Caco-2 (cell line): ENCODE measurements at regions of chr3 and their contacts with region 1.

Region 1: DNA sequence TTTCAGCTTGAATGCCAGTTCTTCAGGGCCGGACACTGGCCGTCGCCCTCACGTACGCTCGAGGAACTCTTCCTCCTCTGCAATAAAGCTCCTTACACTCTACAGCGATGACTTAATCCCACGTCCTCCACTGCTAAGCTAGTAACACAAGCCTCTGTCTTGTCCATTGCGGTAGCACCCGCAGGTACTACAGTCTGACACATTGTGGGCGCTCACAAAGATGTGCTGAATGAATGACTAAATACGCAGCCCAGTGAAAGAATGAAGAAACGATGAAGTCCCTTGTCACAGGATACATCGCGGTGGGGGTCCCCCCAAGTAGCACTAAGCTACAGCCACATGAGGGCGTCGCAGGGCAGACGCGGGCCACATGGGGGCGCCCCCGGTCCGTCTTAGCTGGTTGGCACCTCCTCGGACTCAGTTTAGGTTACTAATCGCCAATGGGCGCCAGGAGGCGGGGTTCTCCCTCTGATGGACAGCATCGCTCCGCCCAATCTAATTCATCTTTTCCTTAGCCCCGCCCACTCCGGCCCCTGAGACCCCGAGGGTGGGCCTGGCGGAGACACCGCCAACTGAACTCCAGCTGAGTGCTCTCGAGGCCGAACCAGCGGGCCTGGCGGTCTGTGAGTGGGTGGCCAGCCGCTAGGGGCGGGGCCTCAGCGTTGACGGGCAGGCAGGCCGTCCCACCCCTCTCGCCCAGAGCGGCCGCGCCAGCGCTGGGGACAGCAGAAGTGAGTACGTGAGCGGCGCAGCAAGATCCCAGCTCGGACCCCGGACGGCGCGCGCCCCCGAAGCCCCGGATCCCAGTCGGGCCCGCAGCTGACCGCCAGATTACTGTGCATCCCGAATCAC is at the start of gene EPHB3:
- DNase-seq: peak; percentile 98 to 99
- H3K4me3 ChIP-seq: peak within 1 kb of the TSS; percentile 80
- H3K4me3 Mint-ChIP-seq: peak within 1 kb of the TSS; percentile 47
- H3K27ac Mint-ChIP-seq: no peak within 1 kb of the TSS
- H3K4me1 ChIP-seq: peaks cover 19% of the 10 kb centered on the region
- H3K4me1 Mint-ChIP-seq: peaks cover 24% of the 10 kb centered on the region
- H3K27me3 ChIP-seq: peaks cover 1% of the 10 kb centered on the region; the same call in 1 of the 2 replicates
- H3K27me3 Mint-ChIP-seq: peaks cover 12% of the 10 kb centered on the region
- CTCF ChIP-seq: peak; percentile 97 to 100
- total RNA-seq, gene EPHB3: 5.6 and 6.9 TPM in 2 replicates

Region 2: GRCh38 chr3:184711493-184712247 is 150.4 kb after region 1 on chr3 and contains the start of gene MAGEF1:
- CTCF ChIA-PET with region 1: no interaction called
- POLR2A ChIA-PET with region 1: interaction called, 9 read pairs
- intact Hi-C with region 1: loop called (anchors 1 kb)
- DNase-seq: peak; percentile 91 to 92
- H3K4me3 ChIP-seq: peak within 1 kb of the TSS; percentile 88
- H3K4me3 Mint-ChIP-seq: peak within 1 kb of the TSS; percentile 95
- H3K27ac Mint-ChIP-seq: peak within 1 kb of the TSS; percentile 89
- H3K4me1 ChIP-seq: no peaks in the 10 kb centered on the region
- H3K4me1 Mint-ChIP-seq: peaks cover 14% of the 10 kb centered on the region
- H3K27me3 ChIP-seq: no peaks in the 10 kb centered on the region
- H3K27me3 Mint-ChIP-seq: no peaks in the 10 kb centered on the region
- CTCF ChIP-seq: no peak
- total RNA-seq, gene MAGEF1: 52.2 and 59.1 TPM in 2 replicates

Region 3: DNA sequence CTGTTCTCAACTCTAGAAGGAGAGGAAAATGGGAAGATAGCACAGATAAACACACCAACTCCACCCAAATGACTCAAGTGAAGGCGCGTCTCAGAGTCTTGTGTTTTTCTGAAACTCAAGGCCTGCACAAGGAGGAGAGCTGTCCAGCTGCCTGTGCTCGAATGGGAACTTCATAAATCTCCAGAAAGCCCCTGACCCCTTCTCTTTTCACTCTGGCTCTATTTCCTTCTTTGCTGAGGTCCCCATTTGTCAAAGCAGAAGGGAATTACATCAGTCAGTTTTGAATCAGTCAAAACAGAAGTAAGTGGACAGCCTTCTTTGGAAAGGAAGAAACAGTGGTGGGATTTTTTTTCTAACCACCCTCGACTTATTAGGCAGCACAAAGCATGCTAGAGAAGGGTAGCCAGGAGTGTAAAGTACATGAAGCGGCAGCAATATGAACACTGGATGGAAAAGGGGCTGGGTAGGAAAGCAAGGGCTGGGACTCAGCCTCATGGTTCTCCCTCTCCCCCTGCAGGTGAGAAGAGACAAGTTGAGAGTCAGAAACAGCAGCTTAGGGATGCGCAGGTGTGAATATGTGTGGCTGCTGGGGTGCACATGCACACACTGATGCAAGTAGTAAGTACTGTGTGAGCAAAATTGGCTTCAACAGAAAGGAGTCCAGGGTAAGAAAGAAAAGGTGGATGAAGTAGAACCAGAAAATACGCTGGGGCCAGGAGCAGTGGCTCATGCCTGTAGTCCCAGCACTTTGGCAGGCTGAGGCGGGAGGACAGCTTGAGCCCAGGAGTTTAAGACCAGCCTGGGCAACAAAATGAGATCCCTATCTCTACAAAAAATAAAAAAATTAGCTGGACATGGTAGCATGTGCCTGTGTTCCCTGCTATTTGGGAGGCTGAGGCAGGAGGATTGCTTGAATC is 187.2 kb after region 1 on chr3:
- CTCF ChIA-PET with region 1: interaction called, 29 read pairs
- POLR2A ChIA-PET with region 1: no interaction called
- intact Hi-C with region 1: loop called (anchors 1 kb)
- DNase-seq: peak; percentile 53 to 57
- H3K4me3 ChIP-seq: no peak overlapping the region
- H3K4me3 Mint-ChIP-seq: no peak overlapping the region
- H3K27ac Mint-ChIP-seq: no peak overlapping the region
- H3K4me1 ChIP-seq: peaks cover 21% of the 10 kb centered on the region
- H3K4me1 Mint-ChIP-seq: peaks cover 11% of the 10 kb centered on the region
- H3K27me3 ChIP-seq: no peaks in the 10 kb centered on the region
- H3K27me3 Mint-ChIP-seq: peaks cover 3% of the 10 kb centered on the region
- CTCF ChIP-seq: peak; percentile 52 to 78

Region 4: DNA sequence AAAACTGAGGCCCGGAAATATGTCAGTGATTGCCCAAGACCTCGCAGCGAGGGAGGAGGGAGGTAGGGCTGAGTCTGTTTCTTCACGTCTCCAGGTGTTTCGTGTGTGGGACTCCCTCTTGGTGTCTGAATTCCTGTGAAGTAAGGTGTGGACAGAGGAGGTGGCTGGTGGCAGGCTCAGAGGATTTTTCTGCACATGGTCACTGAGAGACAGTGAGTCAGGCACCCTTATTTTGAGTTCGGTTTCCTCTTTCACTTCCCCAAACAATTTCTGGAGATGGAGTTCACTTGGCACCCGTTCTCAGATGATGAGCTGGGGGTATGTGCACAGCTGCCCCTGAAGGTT is 204.4 kb after region 1 on chr3:
- CTCF ChIA-PET with region 1: interaction called, 10 read pairs
- POLR2A ChIA-PET with region 1: no interaction called
- intact Hi-C with region 1: no loop called
- DNase-seq: no peak
- H3K4me3 ChIP-seq: no peak overlapping the region
- H3K4me3 Mint-ChIP-seq: no peak overlapping the region
- H3K27ac Mint-ChIP-seq: no peak overlapping the region
- H3K4me1 ChIP-seq: no peaks in the 10 kb centered on the region
- H3K4me1 Mint-ChIP-seq: peaks cover 9% of the 10 kb centered on the region
- H3K27me3 ChIP-seq: no peaks in the 10 kb centered on the region
- H3K27me3 Mint-ChIP-seq: no peaks in the 10 kb centered on the region
- CTCF ChIP-seq: no peak

Region 5: DNA sequence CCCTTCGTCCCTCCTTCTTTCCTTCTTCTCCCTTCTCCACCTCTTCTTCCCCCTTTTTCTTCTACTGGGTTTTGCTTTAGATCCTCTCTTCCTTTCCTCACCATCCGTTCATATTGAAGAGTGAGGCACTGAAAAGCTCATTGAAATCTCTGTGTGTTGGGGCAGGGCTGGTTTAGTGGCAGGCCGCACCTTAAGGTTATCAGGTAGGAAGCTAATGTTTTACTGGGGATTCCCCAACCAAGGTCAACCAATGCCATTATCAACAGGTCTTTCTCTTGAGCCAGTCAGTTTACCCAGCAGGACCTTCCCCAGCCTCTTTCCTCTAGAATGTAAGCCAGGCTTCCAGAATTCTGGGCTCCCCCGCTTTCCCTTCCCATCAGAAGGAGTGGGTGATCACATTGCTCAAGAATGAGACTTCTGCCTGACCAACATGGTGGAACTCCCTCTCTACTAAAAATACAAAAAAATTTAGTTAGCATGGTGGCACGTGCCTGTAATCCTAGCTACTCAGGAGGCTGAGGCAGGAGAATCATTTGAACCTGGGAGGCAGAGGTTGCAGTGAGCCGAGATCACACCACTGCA is 239.2 kb after region 1 on chr3:
- CTCF ChIA-PET with region 1: interaction called, 12 read pairs
- POLR2A ChIA-PET with region 1: no interaction called
- intact Hi-C with region 1: loop called (anchors 1 kb)
- DNase-seq: peak in 1 of 2 experiments; percentile 11
- H3K4me3 ChIP-seq: no peak overlapping the region
- H3K4me3 Mint-ChIP-seq: no peak overlapping the region
- H3K27ac Mint-ChIP-seq: peak overlapping the region; percentile 7
- H3K4me1 ChIP-seq: peaks cover 21% of the 10 kb centered on the region
- H3K4me1 Mint-ChIP-seq: peaks cover 21% of the 10 kb centered on the region
- H3K27me3 ChIP-seq: no peaks in the 10 kb centered on the region
- H3K27me3 Mint-ChIP-seq: no peaks in the 10 kb centered on the region
- CTCF ChIP-seq: no peak